KBM-7 (cell line): ENCODE measurements at regions of chr22 and their contacts with region 1.

Region 1: GRCh38 chr22:50481440-50482106 is at the start of gene ADM2:
- DNase-seq: no peak

Region 2: GRCh38 chr22:50085211-50085972 is 396.2 kb before region 1 on chr22 and contains the start of gene MLC1:
- in situ Hi-C with region 1: no loop called
- DNase-seq: peak; percentile 99

Region 3: GRCh38 chr22:50435291-50436014 is 46.1 kb before region 1 on chr22:
- in situ Hi-C with region 1: loop called (anchors 10 kb)
- DNase-seq: no peak